H1 (cell line): ENCODE measurements at regions of chr5 and their contacts with region 1.

Region 1: GRCh38 chr5:32057162-32058096 is 116.7 kb downstream of the GOLPH3 start:
- DNase-seq: no peak
- H3K4me3 ChIP-seq: no peak overlapping the region
- H3K27ac ChIP-seq: no peak overlapping the region
- H3K4me1 ChIP-seq: no peaks in the 10 kb centered on the region
- H3K27me3 ChIP-seq: no peaks in the 10 kb centered on the region
- CTCF ChIP-seq: peak in 1 of 3 experiments; percentile 30; a peak in 2 of 4 replicates
- EP300 ChIP-seq: no peak
- POLR2A ChIP-seq: no peak
- RAD21 ChIP-seq: no peak

Region 2: DNA sequence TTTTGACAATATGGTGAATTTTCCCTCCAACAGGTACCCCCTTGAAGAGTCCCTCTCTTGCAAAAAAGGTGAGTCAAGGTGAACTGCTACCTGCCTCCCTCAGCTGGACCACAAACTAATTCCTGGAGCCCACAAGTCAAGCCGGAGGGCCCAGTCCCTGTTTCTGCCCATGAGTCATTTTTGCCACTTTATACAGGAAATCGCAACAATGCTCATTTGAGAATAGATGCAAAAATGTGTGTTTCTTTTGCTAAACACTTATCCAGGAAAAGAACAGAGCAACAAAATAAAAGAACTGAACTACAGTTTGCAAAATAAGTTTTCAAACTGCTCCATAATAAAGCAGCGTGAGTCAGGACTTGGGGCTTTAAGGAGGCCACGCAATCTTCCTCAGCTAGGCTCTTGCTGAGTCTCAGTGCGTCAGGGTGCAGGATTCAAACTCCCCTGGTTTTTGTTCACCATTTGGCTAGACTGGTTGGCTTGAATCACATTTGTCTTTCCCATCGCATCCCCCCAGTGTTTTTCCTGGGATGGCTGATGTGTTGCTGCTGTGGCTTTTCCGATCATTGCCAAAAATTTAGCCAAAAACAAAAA is 14.0 kb after region 1 on chr5:
- CTCF ChIA-PET with region 1: interaction called, 28 read pairs
- POLR2A ChIA-PET with region 1: no interaction called
- DNase-seq: no peak
- H3K4me3 ChIP-seq: no peak overlapping the region
- H3K27ac ChIP-seq: no peak overlapping the region
- H3K4me1 ChIP-seq: no peaks in the 10 kb centered on the region
- H3K27me3 ChIP-seq: no peaks in the 10 kb centered on the region
- CTCF ChIP-seq: no peak
- EP300 ChIP-seq: no peak
- POLR2A ChIP-seq: no peak
- RAD21 ChIP-seq: no peak

Region 3: GRCh38 chr5:32312647-32313523 is 255.5 kb after region 1 on chr5 and contains the start of gene MTMR12:
- CTCF ChIA-PET with region 1: no interaction called
- POLR2A ChIA-PET with region 1: no interaction called
- DNase-seq: peak; percentile 99 to 100
- H3K4me3 ChIP-seq: peak within 1 kb of the TSS; percentile 79 to 80 (median 79)
- H3K27ac ChIP-seq: peak within 1 kb of the TSS; percentile 70; the same call in 1 of the 2 replicates
- H3K4me1 ChIP-seq: peaks cover 0 to 8% (median 4%) of the 10 kb centered on the region in 4 experiments; a peak in 5 of 7 replicates
- H3K27me3 ChIP-seq: no peaks in the 10 kb centered on the region
- CTCF ChIP-seq: no peak
- EP300 ChIP-seq: no peak
- POLR2A ChIP-seq: peak; percentile 89 to 91
- RAD21 ChIP-seq: no peak
- total RNA-seq, gene MTMR12: 49.3 and 59.3 TPM in 2 replicates